Activated CD4-positive, alpha-beta T cell treated with anti-CD3 and anti-CD28 coated beads for 36 hours (primary cell): ENCODE measurements at regions of chr6 and their contacts with region 1.

Region 1: GRCh38 chr6:29797966-29798365 is 29.7 kb upstream of the HLA-G start:
- DNase-seq: no peak
- ATAC-seq: no peak
- H3K4me3 Mint-ChIP-seq: no peak overlapping the region
- H3K27ac Mint-ChIP-seq: no peak overlapping the region
- H3K4me1 Mint-ChIP-seq: peaks cover 9% of the 10 kb centered on the region
- H3K27me3 Mint-ChIP-seq: peaks cover 27% of the 10 kb centered on the region

Region 2: GRCh38 chr6:29777310-29777709 is 20.7 kb before region 1 on chr6:
- CTCF ChIA-PET with region 1: no interaction called
- POLR2A ChIA-PET with region 1: no interaction called
- intact Hi-C with region 1: no loop called
- DNase-seq: no peak
- ATAC-seq: no peak
- H3K4me3 Mint-ChIP-seq: no peak overlapping the region
- H3K27ac Mint-ChIP-seq: no peak overlapping the region
- H3K4me1 Mint-ChIP-seq: no peaks in the 10 kb centered on the region
- H3K27me3 Mint-ChIP-seq: peaks cover 32% of the 10 kb centered on the region

Region 3: DNA sequence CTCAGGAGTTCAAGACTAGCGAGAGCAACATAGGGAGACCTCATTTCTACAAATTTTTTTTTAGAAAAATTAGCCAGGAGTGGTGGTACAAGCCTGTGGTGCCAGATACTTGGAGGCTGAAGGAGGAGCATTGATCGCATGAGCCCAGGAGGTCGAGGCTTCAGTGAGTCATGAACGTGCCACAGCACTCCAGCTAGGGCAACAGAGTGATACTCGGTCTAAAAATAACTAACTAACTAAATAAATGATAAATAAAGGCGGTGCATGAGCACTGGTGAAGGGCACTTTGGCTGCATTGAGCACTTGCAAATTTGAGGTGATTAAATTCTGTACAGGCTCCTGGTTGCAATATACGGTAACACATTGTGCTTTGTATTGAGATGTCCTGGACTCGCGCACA is 157.8 kb after region 1 on chr6:
- CTCF ChIA-PET with region 1: no interaction called
- POLR2A ChIA-PET with region 1: no interaction called
- intact Hi-C with region 1: loop called (anchors 1 kb)
- DNase-seq: no peak
- ATAC-seq: no peak
- H3K4me3 Mint-ChIP-seq: no peak overlapping the region
- H3K27ac Mint-ChIP-seq: no peak overlapping the region
- H3K4me1 Mint-ChIP-seq: peaks cover 4% of the 10 kb centered on the region
- H3K27me3 Mint-ChIP-seq: no peaks in the 10 kb centered on the region